IMR-90 (cell line): ENCODE measurements at regions of chr22 and their contacts with region 1.

Region 1: DNA sequence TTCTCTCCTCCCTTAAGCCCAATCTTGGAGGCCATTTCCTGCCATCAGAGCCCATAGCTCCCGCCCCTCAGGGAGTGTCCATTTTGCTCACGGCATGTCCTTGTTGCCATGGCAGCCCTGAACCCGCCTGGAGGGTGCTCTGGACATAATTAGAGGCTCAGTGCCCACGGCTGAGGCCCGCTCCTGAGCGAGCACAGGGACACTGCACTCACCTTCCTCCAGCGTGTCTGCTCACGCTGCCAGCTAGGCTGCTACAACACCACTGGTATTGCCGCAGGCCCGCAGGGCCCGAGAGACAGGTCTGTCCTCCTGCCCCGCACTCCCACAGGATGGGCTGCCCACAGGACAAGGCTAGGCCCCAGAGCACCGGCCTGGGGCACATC is 11.0 kb upstream of the SUSD2 start:
- DNase-seq: no peak
- ATAC-seq: no peak
- H3K4me3 ChIP-seq: no peak overlapping the region
- H3K27ac ChIP-seq: no peak overlapping the region
- H3K4me1 ChIP-seq: peaks cover 1% of the 10 kb centered on the region; the same call in 1 of the 2 replicates
- H3K27me3 ChIP-seq: no peaks in the 10 kb centered on the region
- CTCF ChIP-seq: no peak
- POLR2A ChIP-seq: no peak
- RAD21 ChIP-seq: no peak

Region 2: GRCh38 chr22:23997092-23997491 is 173.1 kb before region 1 on chr22:
- CTCF ChIA-PET with region 1: no interaction called
- POLR2A ChIA-PET with region 1: no interaction called
- dilution Hi-C with region 1: no loop called
- in situ Hi-C with region 1: loop called (anchors 5 kb)
- intact Hi-C with region 1: no loop called
- DNase-seq: no peak
- ATAC-seq: no peak
- H3K4me3 ChIP-seq: no peak overlapping the region
- H3K27ac ChIP-seq: no peak overlapping the region
- H3K4me1 ChIP-seq: no peaks in the 10 kb centered on the region
- H3K27me3 ChIP-seq: no peaks in the 10 kb centered on the region
- CTCF ChIP-seq: no peak
- POLR2A ChIP-seq: no peak
- RAD21 ChIP-seq: no peak